AG04450 (cell line): ENCODE measurements at regions of chr5 and their contacts with region 1.

Region 1: GRCh38 chr5:38845526-38846378 is at the start of gene OSMR:
- DNase-seq: peak; percentile 97
- H3K4me3 ChIP-seq: peak within 1 kb of the TSS; percentile 89
- H3K27ac ChIP-seq: peak within 1 kb of the TSS; percentile 92
- H3K27me3 ChIP-seq: no peaks in the 10 kb centered on the region
- CTCF ChIP-seq: no peak
- polyA plus RNA-seq, gene OSMR: 100 and 102 TPM in 2 replicates

Region 2: GRCh38 chr5:38396766-38397165 is 449.0 kb before region 1 on chr5:
- CTCF ChIA-PET with region 1: no interaction called
- POLR2A ChIA-PET with region 1: no interaction called
- DNase-seq: no peak
- H3K4me3 ChIP-seq: no peak overlapping the region
- H3K27ac ChIP-seq: no peak overlapping the region
- H3K27me3 ChIP-seq: peaks cover 48% of the 10 kb centered on the region
- CTCF ChIP-seq: no peak

Region 3: DNA sequence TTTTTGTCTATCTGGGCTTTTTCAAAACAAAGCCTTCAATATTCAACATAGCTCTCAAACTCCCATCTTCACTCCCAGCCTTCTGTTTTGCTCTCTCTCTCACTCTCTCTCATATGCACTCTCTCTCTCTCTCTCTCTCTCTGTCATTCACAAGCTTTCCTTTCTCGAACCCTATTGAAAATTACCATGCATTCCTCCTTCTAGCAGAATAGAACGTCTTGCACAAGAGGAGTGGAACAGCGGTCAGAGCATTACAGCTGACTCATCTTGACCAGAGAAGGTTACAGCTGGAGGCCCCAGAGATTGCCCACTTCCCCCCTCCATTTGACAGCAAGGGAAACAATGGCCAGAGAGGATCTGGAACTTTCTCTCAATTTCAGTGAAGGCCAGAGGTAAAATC is 238.4 kb before region 1 on chr5:
- CTCF ChIA-PET with region 1: no interaction called
- POLR2A ChIA-PET with region 1: no interaction called
- DNase-seq: peak; percentile 91
- H3K4me3 ChIP-seq: no peak overlapping the region
- H3K27ac ChIP-seq: peak overlapping the region; percentile 66
- H3K27me3 ChIP-seq: no peaks in the 10 kb centered on the region
- CTCF ChIP-seq: no peak

Region 4: DNA sequence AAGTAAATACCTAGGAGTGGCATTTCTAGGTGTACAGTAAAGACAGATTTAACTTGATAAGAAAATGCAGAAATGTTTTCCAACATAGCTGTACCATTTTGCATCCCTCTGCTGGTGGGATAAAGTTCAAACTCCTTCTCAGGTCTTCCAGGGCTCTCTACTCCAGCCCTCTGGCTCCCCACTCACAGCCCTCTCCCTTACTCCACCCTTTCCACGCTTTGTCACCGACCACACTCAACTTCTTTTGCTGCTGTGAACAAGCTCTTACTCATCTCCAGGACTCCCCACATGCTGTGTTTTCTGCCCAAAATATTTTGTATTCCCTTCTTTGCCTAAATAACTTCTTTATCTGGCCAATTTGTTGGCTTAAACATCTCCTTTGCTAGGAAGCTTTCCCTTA is 90.6 kb before region 1 on chr5:
- CTCF ChIA-PET with region 1: no interaction called
- POLR2A ChIA-PET with region 1: no interaction called
- DNase-seq: peak; percentile 26
- H3K4me3 ChIP-seq: no peak overlapping the region
- H3K27ac ChIP-seq: no peak overlapping the region
- H3K27me3 ChIP-seq: no peaks in the 10 kb centered on the region
- CTCF ChIP-seq: peak; percentile 27; the same call in 1 of the 2 replicates

Region 5: GRCh38 chr5:38871790-38872551 is 26.2 kb after region 1 on chr5:
- CTCF ChIA-PET with region 1: interaction called, 3 read pairs
- POLR2A ChIA-PET with region 1: interaction called, 10 read pairs
- DNase-seq: peak; percentile 97
- H3K4me3 ChIP-seq: no peak overlapping the region
- H3K27ac ChIP-seq: peak overlapping the region; percentile 92
- H3K27me3 ChIP-seq: no peaks in the 10 kb centered on the region
- CTCF ChIP-seq: no peak